T-cell (primary cell): ENCODE measurements at regions of chr5 and their contacts with region 1.

Region 1: GRCh38 chr5:130116462-130116861 is 212.2 kb downstream of the CHSY3 start:
- DNase-seq: no peak
- ATAC-seq: no peak
- H3K4me3 ChIP-seq: no peak overlapping the region
- H3K4me3 Mint-ChIP-seq: no peak overlapping the region
- H3K27ac ChIP-seq: no peak overlapping the region
- H3K27ac Mint-ChIP-seq: no peak overlapping the region
- H3K4me1 ChIP-seq: no peaks in the 10 kb centered on the region
- H3K4me1 Mint-ChIP-seq: no peaks in the 10 kb centered on the region
- H3K27me3 ChIP-seq: no peaks in the 10 kb centered on the region
- H3K27me3 Mint-ChIP-seq: peaks cover 3 to 21% of the 10 kb centered on the region in 2 donors

Region 2: DNA sequence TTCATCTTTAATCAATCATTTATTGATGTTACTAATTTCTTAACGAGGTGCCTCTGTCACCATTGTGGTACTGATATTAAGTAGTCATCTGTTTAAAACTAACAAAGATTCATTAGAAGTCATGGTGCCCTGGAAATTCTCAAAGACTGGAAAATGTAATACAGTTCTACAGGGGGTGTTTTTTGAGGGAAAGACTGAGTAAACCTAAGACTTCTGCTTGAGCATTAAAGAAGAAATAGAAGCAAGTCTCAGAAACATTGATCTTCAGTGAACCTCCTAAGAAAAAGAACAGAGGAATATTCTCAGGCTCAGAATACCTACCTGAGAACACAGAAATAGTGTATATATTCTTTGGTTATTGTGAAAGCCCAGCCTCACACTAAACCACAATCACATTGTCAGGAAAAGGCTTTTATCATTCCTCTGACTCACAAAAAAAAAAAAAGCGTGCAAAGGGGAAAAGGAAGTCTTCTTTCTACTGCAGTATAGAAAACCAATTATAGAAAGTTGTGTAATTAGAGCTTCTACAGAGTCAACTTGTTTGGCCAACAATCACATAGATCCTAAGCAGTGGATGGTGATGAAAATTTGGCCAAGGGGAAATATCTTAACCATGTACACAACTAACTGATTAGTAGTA is 987.8 kb after region 1 on chr5:
- CTCF ChIA-PET with region 1: interaction called in 1 of 2 experiments, 3 read pairs
- POLR2A ChIA-PET with region 1: interaction called in 1 of 2 experiments, 10 read pairs
- DNase-seq: no peak
- ATAC-seq: no peak
- H3K4me3 ChIP-seq: no peak overlapping the region
- H3K4me3 Mint-ChIP-seq: no peak overlapping the region
- H3K27ac ChIP-seq: no peak overlapping the region
- H3K27ac Mint-ChIP-seq: no peak overlapping the region
- H3K4me1 ChIP-seq: peaks cover 2% of the 10 kb centered on the region in 2 experiments
- H3K4me1 Mint-ChIP-seq: peaks cover 8 to 19% (median 9%) of the 10 kb centered on the region in 3 donors
- H3K27me3 ChIP-seq: no peaks in the 10 kb centered on the region
- H3K27me3 Mint-ChIP-seq: peaks cover 0 to 2% of the 10 kb centered on the region in 2 donors